ENCODE measurements at regions of chr12 and their contacts with region 1.

Region 1: DNA sequence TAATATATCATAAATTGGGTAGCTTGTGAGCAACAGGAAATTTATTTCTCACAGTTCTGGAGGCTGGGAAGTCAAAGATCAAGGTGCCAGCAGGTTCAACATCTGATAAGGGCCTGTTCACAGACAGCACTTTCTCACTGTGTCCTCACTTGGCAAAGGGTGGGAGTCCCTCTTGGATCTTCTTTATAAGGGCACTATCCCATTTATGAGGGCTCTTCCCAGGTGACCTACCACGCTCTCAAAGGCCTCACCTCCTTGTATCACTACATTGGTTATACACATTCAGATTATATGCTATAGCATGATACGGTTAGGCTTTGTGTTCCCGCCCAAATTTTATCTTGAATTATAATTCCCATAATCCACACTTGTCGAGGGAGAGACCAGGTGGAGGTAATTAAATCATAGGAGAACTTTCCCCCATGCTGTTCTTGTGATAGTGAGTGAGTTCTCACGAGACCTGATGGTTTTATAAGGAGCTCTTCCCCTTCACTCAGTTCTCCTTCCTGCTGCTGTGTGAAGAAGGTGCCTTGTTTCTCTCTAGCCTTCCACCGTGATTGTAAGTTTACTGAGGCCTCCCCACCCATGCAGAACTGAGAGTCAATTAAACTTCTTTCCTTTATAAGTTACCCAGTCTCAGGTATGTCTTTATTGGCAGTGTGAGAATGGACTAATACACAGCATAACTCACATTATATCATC is 19.2 kb upstream of the LRIG3 start:
- DNase-seq: no peak
- H3K4me3 ChIP-seq: no peak overlapping the region
- H3K27ac ChIP-seq: no peak overlapping the region
- H3K4me1 ChIP-seq: no peaks in the 10 kb centered on the region
- H3K27me3 ChIP-seq: no peaks in the 10 kb centered on the region
- CTCF ChIP-seq: no peak
- POLR2A ChIP-seq: no peak

Region 2: GRCh38 chr12:58915634-58916033 is 23.9 kb before region 1 on chr12:
- intact Hi-C with region 1: loop called (anchors 2 kb)
- DNase-seq: no peak
- H3K4me3 ChIP-seq: peak overlapping the region; percentile 88 to 92 (median 92)
- H3K27ac ChIP-seq: peak overlapping the region; percentile 96 to 98
- H3K4me1 ChIP-seq: no peaks in the 10 kb centered on the region
- H3K27me3 ChIP-seq: no peaks in the 10 kb centered on the region
- CTCF ChIP-seq: no peak
- POLR2A ChIP-seq: no peak

Region 3: GRCh38 chr12:58980768-58981167 is 41.2 kb after region 1 on chr12:
- intact Hi-C with region 1: no loop called
- DNase-seq: no peak
- H3K4me3 ChIP-seq: no peak overlapping the region
- H3K27ac ChIP-seq: no peak overlapping the region
- H3K4me1 ChIP-seq: no peaks in the 10 kb centered on the region
- H3K27me3 ChIP-seq: no peaks in the 10 kb centered on the region
- CTCF ChIP-seq: no peak
- POLR2A ChIP-seq: no peak

Measured in breast epithelium (tissue), 4 donors.